Activated CD4-positive, alpha-beta memory T cell treated with anti-CD3 and anti-CD28 coated beads for 36 hours (primary cell): ENCODE measurements at regions of chr19 and their contacts with region 1.

Region 1: DNA sequence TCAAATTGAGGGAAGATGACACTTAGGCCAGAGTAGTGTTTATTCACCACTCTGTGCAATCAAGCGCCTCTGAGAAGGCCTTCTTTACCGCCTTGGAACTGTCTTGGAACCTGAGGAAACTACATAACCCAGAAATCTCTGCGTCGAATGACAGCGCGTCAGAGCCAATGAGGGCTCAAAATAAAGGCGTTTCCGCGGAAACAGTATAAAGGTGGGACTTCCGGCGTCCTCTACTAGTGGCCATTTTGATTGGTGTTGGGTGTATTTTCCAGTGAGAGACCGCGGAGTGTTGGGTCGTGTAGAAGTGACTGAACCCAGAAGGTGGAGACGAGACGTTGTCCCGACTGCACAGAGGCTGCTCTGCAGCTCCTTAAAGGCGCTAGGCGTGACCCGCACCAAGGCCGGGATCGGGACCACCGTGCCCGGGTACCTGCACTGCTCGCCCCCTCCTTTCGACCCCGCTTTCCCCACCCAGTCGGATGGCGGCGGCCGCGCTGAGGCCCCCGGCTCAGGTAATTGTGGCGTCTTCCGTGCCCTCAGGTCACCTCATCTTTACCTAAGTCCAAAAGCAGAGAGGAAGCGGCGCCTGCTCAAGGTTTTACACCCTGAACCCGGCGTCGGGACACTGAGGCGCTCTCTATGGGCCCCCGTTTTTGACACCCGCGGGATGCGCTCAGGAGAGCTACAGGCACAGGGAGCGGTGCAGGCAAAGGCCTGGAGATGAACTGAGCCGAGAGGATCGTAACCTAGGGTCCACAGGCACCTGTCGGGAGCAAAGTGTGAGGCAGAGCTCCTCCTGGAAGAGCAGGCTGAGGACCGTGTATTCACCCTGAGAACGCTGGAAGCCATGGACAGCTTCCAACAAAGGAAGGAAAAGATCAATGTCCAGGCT is at the start of gene ZNF776:
- DNase-seq: peak; percentile 89
- H3K4me3 Mint-ChIP-seq: peak within 1 kb of the TSS; percentile 94
- H3K27ac Mint-ChIP-seq: peak within 1 kb of the TSS; percentile 86
- H3K4me1 Mint-ChIP-seq: peaks cover 13% of the 10 kb centered on the region
- H3K27me3 Mint-ChIP-seq: no peaks in the 10 kb centered on the region
- total RNA-seq, gene ZNF776: 7.8 to 8.3 TPM

Region 2: DNA sequence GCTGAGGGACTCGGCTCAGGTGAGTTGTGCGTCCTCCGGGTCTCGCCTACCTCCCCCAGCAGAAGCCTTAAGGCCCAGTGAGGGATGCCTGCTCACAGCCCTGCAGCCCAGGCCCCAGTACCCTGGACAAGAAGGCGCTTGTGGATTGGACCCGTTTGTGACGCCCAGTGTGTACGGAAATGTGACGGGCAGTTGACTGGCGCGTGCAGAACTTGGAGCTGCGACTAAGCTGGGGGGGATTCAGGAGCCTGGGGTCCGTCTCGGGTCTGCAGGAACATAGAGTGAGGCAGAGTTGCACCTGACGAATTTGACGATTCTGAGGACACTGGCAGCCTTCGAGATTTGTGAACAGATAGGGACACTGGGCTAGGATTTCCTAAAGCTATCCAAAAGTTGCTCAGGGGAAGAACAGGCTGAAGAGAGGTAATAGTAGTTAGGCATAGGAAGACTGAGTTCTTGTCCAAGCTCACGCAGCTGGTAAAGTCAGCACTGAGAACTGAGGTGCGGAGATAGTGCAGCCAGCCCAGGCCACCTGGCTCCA is 64.5 kb before region 1 on chr19:
- CTCF ChIA-PET with region 1: no interaction called
- POLR2A ChIA-PET with region 1: no interaction called
- intact Hi-C with region 1: loop called (anchors 2 kb)
- DNase-seq: no peak
- H3K4me3 Mint-ChIP-seq: peak overlapping the region; percentile 92
- H3K27ac Mint-ChIP-seq: peak overlapping the region; percentile 80
- H3K4me1 Mint-ChIP-seq: peaks cover 28% of the 10 kb centered on the region
- H3K27me3 Mint-ChIP-seq: no peaks in the 10 kb centered on the region

Region 3: DNA sequence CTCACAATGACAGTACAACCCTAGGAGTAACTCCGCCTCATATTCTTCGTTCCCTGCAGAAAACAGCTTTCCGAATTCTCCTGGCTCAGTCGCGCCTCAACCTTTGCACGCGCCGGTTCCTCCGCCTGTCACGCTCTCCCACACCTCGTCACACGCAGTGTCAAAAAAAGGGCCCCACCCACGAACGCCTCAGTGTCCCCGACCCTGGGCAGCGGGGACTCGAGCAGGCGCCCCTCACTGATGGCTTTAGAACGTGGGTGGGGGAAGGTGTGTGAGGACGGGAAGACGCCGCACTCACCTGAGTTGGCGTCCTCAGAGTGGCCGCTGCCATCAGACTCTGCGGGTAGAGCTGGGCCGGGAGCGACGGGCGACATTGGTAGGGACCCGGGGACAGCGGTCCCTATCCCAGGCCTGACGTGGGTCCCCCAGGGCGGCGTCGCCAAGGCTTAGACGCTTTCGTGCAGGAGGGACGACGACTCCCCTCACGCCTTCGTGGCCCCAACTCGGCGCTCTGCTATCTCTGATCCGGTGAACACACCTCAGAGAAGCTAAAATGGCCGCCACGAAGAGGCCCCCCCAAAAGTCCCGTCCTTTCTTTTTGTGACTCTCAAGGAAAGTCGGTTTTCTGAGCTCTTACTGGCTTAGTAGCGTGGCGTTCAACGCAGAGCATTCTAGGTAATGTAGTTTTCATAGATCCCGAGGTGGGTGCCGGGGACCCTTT is 38.0 kb before region 1 on chr19 and contains the start of gene ZNF154:
- CTCF ChIA-PET with region 1: no interaction called
- POLR2A ChIA-PET with region 1: no interaction called
- intact Hi-C with region 1: no loop called
- DNase-seq: peak; percentile 38
- H3K4me3 Mint-ChIP-seq: peak within 1 kb of the TSS; percentile 59
- H3K27ac Mint-ChIP-seq: peak within 1 kb of the TSS; percentile 6
- H3K4me1 Mint-ChIP-seq: peaks cover 3% of the 10 kb centered on the region
- H3K27me3 Mint-ChIP-seq: peaks cover 10% of the 10 kb centered on the region
- total RNA-seq, gene ZNF154: 0.48 to 0.61 TPM

Region 4: GRCh38 chr19:57720878-57721277 is 25.9 kb before region 1 on chr19:
- CTCF ChIA-PET with region 1: no interaction called
- POLR2A ChIA-PET with region 1: no interaction called
- intact Hi-C with region 1: loop called (anchors 2 kb)
- DNase-seq: no peak
- H3K4me3 Mint-ChIP-seq: no peak overlapping the region
- H3K27ac Mint-ChIP-seq: no peak overlapping the region
- H3K4me1 Mint-ChIP-seq: peaks cover 2% of the 10 kb centered on the region
- H3K27me3 Mint-ChIP-seq: no peaks in the 10 kb centered on the region

Region 5: DNA sequence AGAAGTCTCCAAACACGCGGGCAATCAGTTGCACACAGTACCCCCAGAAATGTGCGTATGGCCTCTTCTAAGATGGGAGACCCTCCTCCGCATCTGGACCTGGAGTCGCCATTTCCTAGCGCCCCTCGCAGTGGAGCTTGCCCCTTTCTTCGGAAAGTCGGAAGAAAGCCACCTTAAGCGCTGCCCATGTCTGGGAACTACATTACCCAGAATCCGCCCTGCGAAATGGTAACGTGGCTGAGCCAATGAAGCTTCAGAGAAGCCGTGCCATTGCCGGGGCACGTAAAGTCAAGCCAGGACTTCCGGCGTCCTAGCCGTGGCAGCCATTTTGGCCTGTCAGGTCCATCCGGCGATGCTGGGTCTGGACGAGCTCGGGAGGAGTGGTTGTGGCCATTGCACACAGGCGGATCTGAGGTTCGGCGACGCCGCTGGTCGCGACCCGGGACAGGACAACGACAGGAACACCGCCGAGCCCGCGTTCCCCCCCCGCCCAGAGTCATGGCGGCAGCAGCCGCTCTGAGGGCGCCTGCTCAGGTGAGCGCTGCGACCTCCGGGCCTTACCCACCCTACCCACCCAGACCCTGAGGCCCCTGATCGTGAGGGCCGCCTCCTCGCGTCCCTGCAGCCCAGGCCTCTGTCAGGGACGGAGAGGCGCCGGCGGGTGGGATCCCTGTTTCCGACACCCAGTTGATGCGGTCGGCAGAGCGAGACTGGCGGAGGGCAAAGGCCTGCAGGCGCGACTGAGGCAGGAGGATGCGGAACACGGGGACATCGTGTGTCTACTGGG is 22.7 kb after region 1 on chr19 and contains the start of gene ZNF586:
- CTCF ChIA-PET with region 1: no interaction called
- POLR2A ChIA-PET with region 1: no interaction called
- intact Hi-C with region 1: loop called (anchors 1 kb)
- DNase-seq: peak; percentile 92
- H3K4me3 Mint-ChIP-seq: peak within 1 kb of the TSS; percentile 93
- H3K27ac Mint-ChIP-seq: peak within 1 kb of the TSS; percentile 87
- H3K4me1 Mint-ChIP-seq: peaks cover 26% of the 10 kb centered on the region
- H3K27me3 Mint-ChIP-seq: no peaks in the 10 kb centered on the region
- total RNA-seq, gene ZNF586: 11.5 to 11.7 TPM